ENCODE measurements at regions of chr11 and their contacts with region 1.

Region 1: GRCh38 chr11:47495856-47496217 is 46.9 kb upstream of the RAPSN start:
- DNase-seq: no peak
- ATAC-seq: no peak
- H3K4me3 ChIP-seq: no peak overlapping the region
- H3K4me3 Mint-ChIP-seq: no peak overlapping the region
- H3K27ac ChIP-seq: no peak overlapping the region
- H3K27ac Mint-ChIP-seq: no peak overlapping the region
- H3K4me1 ChIP-seq: peaks cover 1% of the 10 kb centered on the region
- H3K4me1 Mint-ChIP-seq: peaks cover 46% of the 10 kb centered on the region
- H3K27me3 ChIP-seq: no peaks in the 10 kb centered on the region
- H3K27me3 Mint-ChIP-seq: no peaks in the 10 kb centered on the region
- CTCF ChIP-seq: no peak

Region 2: GRCh38 chr11:47532597-47533213 is 36.9 kb after region 1 on chr11:
- CTCF ChIA-PET with region 1: no interaction called
- POLR2A ChIA-PET with region 1: interaction called, 3 read pairs
- intact Hi-C with region 1: loop called in 1 of 2 experiments (anchors 2 kb)
- DNase-seq: peak in 1 of 9 experiments; percentile 31
- ATAC-seq: no peak
- H3K4me3 ChIP-seq: no peak overlapping the region
- H3K4me3 Mint-ChIP-seq: peak overlapping the region; percentile 15
- H3K27ac ChIP-seq: no peak overlapping the region
- H3K27ac Mint-ChIP-seq: no peak overlapping the region
- H3K4me1 ChIP-seq: peaks cover 28% of the 10 kb centered on the region
- H3K4me1 Mint-ChIP-seq: peaks cover 54% of the 10 kb centered on the region
- H3K27me3 ChIP-seq: no peaks in the 10 kb centered on the region
- H3K27me3 Mint-ChIP-seq: no peaks in the 10 kb centered on the region
- CTCF ChIP-seq: no peak

Measured in CD8-positive, alpha-beta T cell (primary cell).